Left ventricle myocardium inferior (tissue), 1 donor: ENCODE measurements at regions of chr11 and their contacts with region 1.

Region 1: GRCh38 chr11:44036811-44037657 is 10.7 kb upstream of the ACCSL start:
- DNase-seq: peak; percentile 81
- H3K4me3 ChIP-seq: no peak overlapping the region
- H3K27ac ChIP-seq: no peak overlapping the region
- H3K4me1 ChIP-seq: peaks cover 24% of the 10 kb centered on the region
- H3K27me3 ChIP-seq: no peaks in the 10 kb centered on the region
- CTCF ChIP-seq: peak; percentile 93

Region 2: GRCh38 chr11:43895601-43896000 is 141.4 kb before region 1 on chr11:
- intact Hi-C with region 1: loop called (anchors 2 kb)
- DNase-seq: no peak
- H3K4me3 ChIP-seq: no peak overlapping the region
- H3K27ac ChIP-seq: no peak overlapping the region
- H3K4me1 ChIP-seq: no peaks in the 10 kb centered on the region
- H3K27me3 ChIP-seq: no peaks in the 10 kb centered on the region
- CTCF ChIP-seq: no peak

Region 3: GRCh38 chr11:43944761-43945311 is 92.2 kb before region 1 on chr11:
- intact Hi-C with region 1: loop called (anchors 10 kb)
- DNase-seq: peak; percentile 79
- H3K4me3 ChIP-seq: peak overlapping the region; percentile 83
- H3K27ac ChIP-seq: peak overlapping the region; percentile 93
- H3K4me1 ChIP-seq: peaks cover 53% of the 10 kb centered on the region
- H3K27me3 ChIP-seq: peaks cover 32% of the 10 kb centered on the region
- CTCF ChIP-seq: peak; percentile 87